Ascending aorta (tissue), 2 donors: ENCODE measurements at regions of chr6 and their contacts with region 1.

Region 1: GRCh38 chr6:13012977-13013680 is 296.6 kb downstream of the PHACTR1 start:
- DNase-seq: peak in 1 of 2 donors; percentile 77
- H3K4me3 ChIP-seq: peak overlapping the region; percentile 64 to 66
- H3K27ac ChIP-seq: peak overlapping the region; percentile 74 to 75
- H3K4me1 ChIP-seq: peaks cover 8 to 11% of the 10 kb centered on the region in 2 donors
- H3K27me3 ChIP-seq: no peaks in the 10 kb centered on the region
- CTCF ChIP-seq: no peak

Region 2: GRCh38 chr6:12538881-12539357 is 474.2 kb before region 1 on chr6:
- intact Hi-C with region 1: no loop called
- DNase-seq: peak in 1 of 2 donors; percentile 67
- H3K4me3 ChIP-seq: no peak overlapping the region
- H3K27ac ChIP-seq: no peak overlapping the region
- H3K4me1 ChIP-seq: peaks cover 0 to 7% of the 10 kb centered on the region in 2 donors
- H3K27me3 ChIP-seq: no peaks in the 10 kb centered on the region
- CTCF ChIP-seq: no peak

Region 3: GRCh38 chr6:12911387-12911960 is 101.7 kb before region 1 on chr6:
- intact Hi-C with region 1: loop called (anchors 5 kb)
- DNase-seq: no peak
- H3K4me3 ChIP-seq: no peak overlapping the region
- H3K27ac ChIP-seq: no peak overlapping the region
- H3K4me1 ChIP-seq: no peaks in the 10 kb centered on the region
- H3K27me3 ChIP-seq: no peaks in the 10 kb centered on the region
- CTCF ChIP-seq: peak; percentile 59 to 70 (median 64)

Region 4: DNA sequence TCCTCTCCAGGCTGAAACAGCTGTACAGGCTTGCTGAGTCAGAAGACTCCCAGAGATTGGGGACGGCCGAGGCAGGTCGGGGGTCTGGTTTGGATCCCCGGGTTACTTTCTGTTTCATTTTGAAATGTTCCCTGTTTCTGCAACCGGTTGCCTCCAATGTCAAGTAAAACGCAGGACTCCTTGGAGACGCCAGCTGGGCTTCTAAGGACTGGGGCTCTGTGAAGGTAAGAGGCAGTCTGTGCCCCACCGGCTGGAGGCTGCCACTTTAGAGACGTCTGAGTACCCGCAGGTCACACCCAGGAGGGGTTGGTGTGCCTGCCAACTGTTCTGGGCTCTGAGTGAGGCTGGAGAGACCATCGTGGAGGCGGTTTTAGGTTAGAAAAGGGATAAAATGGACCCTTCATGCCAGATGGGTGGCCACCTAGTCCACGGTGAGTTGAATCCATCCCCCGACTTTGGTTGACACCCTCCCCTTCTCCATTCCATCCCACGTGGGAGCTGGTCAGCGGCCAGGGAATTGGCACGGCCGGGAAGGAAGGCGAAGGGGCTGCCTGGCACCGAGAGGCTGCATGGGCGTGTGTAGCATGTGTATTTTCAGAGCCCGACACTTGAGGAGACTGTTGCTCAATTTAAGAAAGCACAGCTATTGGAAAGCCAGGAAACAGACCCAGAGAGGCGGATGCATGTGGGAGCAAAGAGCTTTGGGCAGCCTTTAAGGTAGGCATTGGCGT is 55.6 kb before region 1 on chr6:
- intact Hi-C with region 1: loop called (anchors 2 kb)
- DNase-seq: peak; percentile 52 to 90
- H3K4me3 ChIP-seq: peak overlapping the region; percentile 64 to 70
- H3K27ac ChIP-seq: peak overlapping the region; percentile 66 to 70
- H3K4me1 ChIP-seq: peaks cover 0 to 17% of the 10 kb centered on the region in 2 donors
- H3K27me3 ChIP-seq: no peaks in the 10 kb centered on the region
- CTCF ChIP-seq: peak in 1 of 3 experiments; percentile 15

Region 5: DNA sequence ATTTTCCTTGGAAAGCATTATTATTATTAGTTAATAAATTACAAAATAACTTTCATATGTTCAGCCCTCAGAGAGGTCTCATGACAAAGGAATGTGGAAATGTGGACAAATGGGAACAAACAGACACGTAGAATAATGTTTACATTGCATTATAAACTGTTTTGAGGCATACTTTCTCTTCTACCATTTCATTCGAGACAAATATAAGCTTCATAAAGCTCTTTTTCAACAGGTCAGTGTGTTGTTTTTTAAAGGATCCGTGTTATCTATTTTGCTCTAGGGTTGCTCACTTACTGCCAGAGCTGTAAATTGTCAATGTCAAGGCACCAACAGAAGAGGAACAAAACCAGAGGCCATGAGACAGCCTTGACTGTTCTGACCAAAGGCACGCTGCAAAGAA is 39.7 kb before region 1 on chr6:
- intact Hi-C with region 1: loop called (anchors 1 kb)
- DNase-seq: no peak
- H3K4me3 ChIP-seq: no peak overlapping the region
- H3K27ac ChIP-seq: no peak overlapping the region
- H3K4me1 ChIP-seq: peaks cover 0 to 35% of the 10 kb centered on the region in 2 donors
- H3K27me3 ChIP-seq: no peaks in the 10 kb centered on the region
- CTCF ChIP-seq: no peak

Region 6: GRCh38 chr6:13328076-13328874 is 315.1 kb after region 1 on chr6 and contains the start of gene TBC1D7:
- intact Hi-C with region 1: loop called (anchors 5 kb)
- DNase-seq: peak; percentile 66 to 97
- H3K4me3 ChIP-seq: peak within 1 kb of the TSS; percentile 73 to 92
- H3K27ac ChIP-seq: peak within 1 kb of the TSS; percentile 84 to 96
- H3K4me1 ChIP-seq: peaks cover 2 to 3% of the 10 kb centered on the region in 2 donors
- H3K27me3 ChIP-seq: no peaks in the 10 kb centered on the region
- CTCF ChIP-seq: peak in 2 of 3 experiments; percentile 7 to 35
- total RNA-seq, gene TBC1D7: 79.5 TPM